Activated CD8-positive, alpha-beta T cell treated with anti-CD3 and anti-CD28 coated beads, Interleukin-2, amount 10 ng/mL, durations not matched to agents 7 days and 5 days (primary cell): ENCODE measurements at regions of chr14 and their contacts with region 1.

Region 1: GRCh38 chr14:91060351-91061055 is at the start of gene RPS6KA5:
- DNase-seq: peak; percentile 100
- ATAC-seq: peak; percentile 85
- H3K4me3 Mint-ChIP-seq: peak within 1 kb of the TSS; percentile 90
- H3K27ac Mint-ChIP-seq: peak within 1 kb of the TSS; percentile 65
- H3K4me1 Mint-ChIP-seq: peaks cover 62% of the 10 kb centered on the region
- H3K27me3 Mint-ChIP-seq: no peaks in the 10 kb centered on the region
- total RNA-seq, gene RPS6KA5: 50.8 to 53.1 TPM

Region 2: DNA sequence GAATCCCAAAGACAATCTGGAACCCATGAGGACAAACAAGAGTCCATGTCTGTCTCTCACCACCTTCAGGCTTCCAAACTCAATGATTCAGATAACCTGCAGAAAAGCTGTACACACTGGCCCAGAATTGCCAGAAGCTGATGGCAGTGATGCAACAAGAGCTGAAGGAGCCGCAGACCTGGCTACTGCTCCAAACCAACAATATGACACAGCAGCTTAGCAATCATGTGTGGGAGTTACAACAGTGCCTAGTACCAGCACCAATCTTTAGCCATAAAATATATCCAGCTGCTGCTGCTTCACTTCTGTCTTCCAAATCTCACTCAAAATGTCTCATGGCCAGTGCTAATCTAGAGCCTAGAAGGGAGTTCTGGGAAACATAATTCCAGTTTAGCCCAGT is 22.1 kb before region 1 on chr14:
- CTCF ChIA-PET with region 1: interaction called, 14 read pairs
- POLR2A ChIA-PET with region 1: interaction called, 4 read pairs
- DNase-seq: peak; percentile 17
- ATAC-seq: no peak
- H3K4me3 Mint-ChIP-seq: no peak overlapping the region
- H3K27ac Mint-ChIP-seq: no peak overlapping the region
- H3K4me1 Mint-ChIP-seq: peaks cover 60% of the 10 kb centered on the region
- H3K27me3 Mint-ChIP-seq: no peaks in the 10 kb centered on the region

Region 3: GRCh38 chr14:91048265-91048664 is 12.2 kb before region 1 on chr14:
- CTCF ChIA-PET with region 1: interaction called, 4 read pairs
- POLR2A ChIA-PET with region 1: interaction called, 10 read pairs
- DNase-seq: no peak
- ATAC-seq: no peak
- H3K4me3 Mint-ChIP-seq: no peak overlapping the region
- H3K27ac Mint-ChIP-seq: no peak overlapping the region
- H3K4me1 Mint-ChIP-seq: peaks cover 60% of the 10 kb centered on the region
- H3K27me3 Mint-ChIP-seq: no peaks in the 10 kb centered on the region

Region 4: DNA sequence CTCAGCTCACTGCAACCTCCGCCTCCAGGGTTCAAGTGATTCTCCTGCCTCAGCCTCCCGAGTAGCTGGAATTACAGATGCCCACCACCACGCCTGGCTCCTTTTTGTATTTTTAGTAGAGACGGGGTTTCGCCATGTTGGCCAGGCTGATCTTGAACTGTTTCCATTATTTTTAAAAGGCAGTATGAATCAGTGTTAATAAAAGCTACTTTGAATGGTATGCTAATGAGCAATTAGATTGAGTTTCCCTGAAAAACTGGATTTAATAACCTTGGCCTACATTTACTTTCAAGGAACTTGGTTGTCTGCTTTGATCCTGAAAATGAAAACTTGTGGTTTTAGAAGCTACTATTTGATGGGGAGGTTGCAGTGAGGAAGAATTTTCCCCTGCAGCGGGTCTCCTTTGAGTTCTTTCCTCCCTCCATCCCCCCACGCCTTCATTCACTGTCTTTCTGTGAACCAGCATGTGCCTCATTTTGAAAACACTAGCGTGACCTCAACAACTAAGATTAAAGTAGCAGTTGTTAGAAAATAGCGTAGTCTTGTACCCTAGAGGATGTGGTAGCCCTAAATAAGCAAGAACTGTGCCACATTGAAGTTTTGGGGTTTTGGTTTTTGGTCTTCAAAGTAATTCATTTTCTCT is 17.7 kb after region 1 on chr14:
- CTCF ChIA-PET with region 1: interaction called, 14 read pairs
- POLR2A ChIA-PET with region 1: interaction called, 33 read pairs
- DNase-seq: peak; percentile 81
- ATAC-seq: peak; percentile 93
- H3K4me3 Mint-ChIP-seq: peak overlapping the region; percentile 40
- H3K27ac Mint-ChIP-seq: peak overlapping the region; percentile 91
- H3K4me1 Mint-ChIP-seq: peaks cover 73% of the 10 kb centered on the region
- H3K27me3 Mint-ChIP-seq: no peaks in the 10 kb centered on the region

Region 5: DNA sequence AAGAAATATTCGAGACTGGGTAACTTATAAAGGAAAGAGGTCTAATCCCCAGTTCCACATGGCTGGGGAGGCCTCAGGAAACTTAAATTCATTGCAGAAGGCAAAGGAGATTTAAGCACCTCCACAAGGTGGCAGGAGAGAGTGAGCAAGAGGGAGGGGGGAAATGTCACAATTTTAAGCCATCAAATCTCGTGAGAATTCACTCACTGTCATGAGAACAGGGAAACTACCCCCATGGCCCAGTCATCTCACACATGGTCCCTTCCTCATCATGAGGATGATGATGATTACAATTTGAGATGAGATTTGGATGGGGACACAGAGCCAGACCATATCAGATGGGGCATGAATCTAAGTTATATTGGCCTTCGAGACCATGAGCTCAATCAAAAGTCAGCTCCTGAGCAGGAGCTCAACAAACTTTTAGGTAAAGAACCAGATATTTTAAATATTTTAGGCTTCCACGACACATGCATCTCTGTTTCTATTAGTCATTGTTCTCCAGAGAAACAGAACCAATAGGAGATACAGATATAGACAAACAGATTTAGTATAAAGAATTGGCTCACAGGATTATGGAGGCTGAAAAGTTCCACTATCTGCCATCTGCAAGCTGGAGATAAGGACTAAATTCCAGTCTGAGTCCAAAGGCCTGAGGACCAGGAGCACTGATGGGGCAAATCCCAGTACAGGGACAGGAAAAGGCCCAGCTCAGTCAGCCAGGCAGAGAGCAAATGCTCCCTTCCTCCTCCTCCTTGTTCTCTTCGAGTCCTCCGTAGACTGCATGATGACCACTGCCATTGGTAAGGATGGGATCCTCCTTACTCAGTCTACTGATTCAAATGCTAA is 78.2 kb after region 1 on chr14:
- CTCF ChIA-PET with region 1: interaction called, 11 read pairs
- POLR2A ChIA-PET with region 1: interaction called, 12 read pairs
- DNase-seq: peak; percentile 71
- ATAC-seq: peak; percentile 38
- H3K4me3 Mint-ChIP-seq: no peak overlapping the region
- H3K27ac Mint-ChIP-seq: peak overlapping the region; percentile 23
- H3K4me1 Mint-ChIP-seq: peaks cover 63% of the 10 kb centered on the region
- H3K27me3 Mint-ChIP-seq: no peaks in the 10 kb centered on the region